ENCODE measurements at regions of chr1 and their contacts with region 1.

Region 1: DNA sequence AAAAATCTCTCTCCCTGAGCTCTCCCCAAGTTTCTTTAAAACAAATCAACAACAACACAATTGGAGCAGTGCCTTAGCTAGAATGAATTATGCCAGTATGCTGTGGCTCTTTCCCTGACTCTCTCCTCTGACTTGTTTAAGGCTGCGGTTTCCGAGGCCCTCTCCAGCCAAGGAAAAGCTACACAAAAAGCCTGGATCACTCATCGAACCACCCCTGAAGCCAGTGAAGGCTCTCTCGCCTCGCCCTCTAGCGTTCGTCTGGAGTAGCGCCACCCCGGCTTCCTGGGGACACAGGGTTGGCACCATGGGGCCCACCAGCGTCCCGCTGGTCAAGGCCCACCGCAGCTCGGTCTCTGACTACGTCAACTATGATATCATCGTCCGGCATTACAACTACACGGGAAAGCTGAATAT is 1.9 kb downstream of the S1PR1 start:
- DNase-seq: peak; percentile 93
- ATAC-seq: peak; percentile 69

Region 2: DNA sequence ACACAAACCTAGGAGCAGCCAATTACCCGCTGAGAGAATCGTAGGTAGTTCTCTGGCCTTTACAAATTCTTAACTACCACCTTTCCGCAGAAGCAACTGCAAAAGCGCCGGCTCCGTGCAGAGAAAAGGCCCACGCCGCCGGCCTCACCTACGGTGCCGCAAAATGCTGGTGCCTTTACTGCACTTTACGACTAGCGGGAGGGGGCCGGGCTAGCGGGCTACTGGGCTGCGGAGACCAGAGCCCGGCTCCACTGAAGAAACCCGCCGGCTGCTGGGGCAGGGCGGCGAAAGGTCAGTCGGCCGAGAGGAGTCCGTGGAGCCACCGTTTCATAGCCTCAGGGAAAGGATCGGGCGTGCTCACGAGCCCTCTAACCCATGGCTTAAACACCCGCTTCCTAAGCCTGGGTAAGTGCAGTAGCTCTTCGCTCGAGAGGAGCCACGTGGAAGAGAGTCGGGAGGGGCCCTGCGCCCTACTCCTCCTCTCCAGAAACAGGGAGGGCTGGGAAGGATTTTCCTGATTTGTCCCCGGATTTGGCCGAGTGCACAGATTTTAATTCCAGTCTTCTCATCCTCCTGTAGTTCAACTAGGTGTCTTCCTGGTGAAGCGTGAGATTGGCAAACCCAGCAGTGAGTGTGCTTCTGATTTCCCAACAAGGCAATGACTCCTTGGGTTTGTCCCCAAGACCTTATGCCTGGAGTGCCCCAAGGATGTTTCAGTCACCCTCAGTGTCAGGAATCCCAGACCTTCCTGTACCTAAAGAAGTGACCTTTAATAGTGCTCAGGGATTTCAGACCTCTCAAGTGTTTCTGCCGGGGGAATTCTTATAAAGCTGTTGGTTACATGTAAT is 212.8 kb before region 1 on chr1 and contains the start of gene DPH5:
- intact Hi-C with region 1: loop called (anchors 5 kb)
- DNase-seq: peak; percentile 96
- ATAC-seq: peak; percentile 99
- total RNA-seq, gene DPH5: 37.2 TPM

Region 3: GRCh38 chr1:101144671-101145448 is 93.8 kb before region 1 on chr1:
- intact Hi-C with region 1: loop called (anchors 5 kb)
- DNase-seq: no peak
- ATAC-seq: no peak

Region 4: GRCh38 chr1:101181930-101182329 is 56.8 kb before region 1 on chr1:
- intact Hi-C with region 1: loop called (anchors 10 kb)
- DNase-seq: no peak
- ATAC-seq: peak; percentile 57

Region 5: GRCh38 chr1:101325144-101325543 is 86.5 kb after region 1 on chr1:
- intact Hi-C with region 1: no loop called
- DNase-seq: no peak
- ATAC-seq: no peak

Region 6: GRCh38 chr1:101410048-101410878 is 171.6 kb after region 1 on chr1:
- intact Hi-C with region 1: no loop called
- DNase-seq: no peak
- ATAC-seq: no peak

Measured in Right ventricle myocardium superior (tissue), 1 donor.